CD4-positive, alpha-beta T cell (primary cell): ENCODE measurements at regions of chr7 and their contacts with region 1.

Region 1: DNA sequence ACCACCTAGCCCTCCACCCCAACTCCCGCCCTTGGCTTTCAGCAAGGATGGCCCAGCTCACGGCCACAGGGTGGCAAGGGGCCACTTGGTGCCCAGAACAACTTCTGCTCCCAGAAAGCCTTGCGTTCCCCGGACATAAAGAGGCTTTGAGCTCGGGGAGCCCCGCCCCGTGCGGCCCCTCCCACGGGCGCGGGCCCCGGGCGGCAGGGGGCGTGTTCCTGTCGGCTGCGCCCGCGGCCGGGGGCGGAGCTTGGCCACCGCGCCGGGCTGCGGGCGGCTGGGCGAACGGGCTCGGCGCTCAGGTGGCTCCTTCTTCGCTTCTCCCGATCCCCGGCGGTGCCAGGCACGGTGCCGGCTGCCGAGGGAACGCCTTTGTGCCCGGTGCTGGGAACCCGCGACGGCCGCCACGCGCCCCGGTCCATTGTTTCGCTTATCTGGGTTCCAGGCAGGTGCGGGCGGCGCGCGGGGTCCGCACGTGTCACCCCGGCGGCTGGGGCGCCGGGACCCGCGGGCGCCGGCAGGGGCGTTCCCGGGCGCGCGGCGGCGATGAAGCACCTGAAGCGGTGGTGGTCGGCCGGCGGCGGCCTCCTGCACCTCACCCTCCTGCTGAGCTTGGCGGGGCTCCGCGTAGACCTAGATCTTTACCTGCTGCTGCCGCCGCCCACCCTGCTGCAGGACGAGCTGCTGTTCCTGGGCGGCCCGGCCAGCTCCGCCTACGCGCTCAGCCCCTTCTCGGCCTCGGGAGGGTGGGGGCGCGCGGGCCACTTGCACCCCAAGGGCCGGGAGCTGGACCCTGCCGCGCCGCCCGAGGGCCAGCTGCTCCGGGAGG is at the start of gene NFE2L3:
- DNase-seq: peak; percentile 60 to 93 (median 76)
- ATAC-seq: peak; percentile 81
- H3K4me3 ChIP-seq: peak within 1 kb of the TSS; percentile 69
- H3K4me3 Mint-ChIP-seq: peak within 1 kb of the TSS; percentile 96
- H3K27ac ChIP-seq: peak within 1 kb of the TSS; percentile 31 to 63
- H3K27ac Mint-ChIP-seq: peak within 1 kb of the TSS; percentile 80
- H3K4me1 ChIP-seq: peaks cover 54% of the 10 kb centered on the region
- H3K4me1 Mint-ChIP-seq: peaks cover 51% of the 10 kb centered on the region
- H3K27me3 ChIP-seq: no peaks in the 10 kb centered on the region
- H3K27me3 Mint-ChIP-seq: no peaks in the 10 kb centered on the region
- CTCF ChIP-seq: no peak
- total RNA-seq, gene NFE2L3: 0.45 to 0.93 TPM

Region 2: GRCh38 chr7:26090927-26091519 is 61.1 kb before region 1 on chr7:
- CTCF ChIA-PET with region 1: no interaction called
- POLR2A ChIA-PET with region 1: interaction called, 25 read pairs
- intact Hi-C with region 1: loop called (anchors 5 kb)
- DNase-seq: peak in 4 of 14 experiments; percentile 31 to 73 (median 64)
- ATAC-seq: peak; percentile 71
- H3K4me3 ChIP-seq: no peak overlapping the region
- H3K4me3 Mint-ChIP-seq: no peak overlapping the region
- H3K27ac ChIP-seq: no peak overlapping the region
- H3K27ac Mint-ChIP-seq: no peak overlapping the region
- H3K4me1 ChIP-seq: peaks cover 7% of the 10 kb centered on the region
- H3K4me1 Mint-ChIP-seq: peaks cover 40% of the 10 kb centered on the region
- H3K27me3 ChIP-seq: no peaks in the 10 kb centered on the region
- H3K27me3 Mint-ChIP-seq: no peaks in the 10 kb centered on the region
- CTCF ChIP-seq: peak; percentile 92

Region 3: GRCh38 chr7:26180792-26181198 is 28.6 kb after region 1 on chr7:
- CTCF ChIA-PET with region 1: no interaction called
- POLR2A ChIA-PET with region 1: interaction called, 11 read pairs
- intact Hi-C with region 1: no loop called
- DNase-seq: no peak
- ATAC-seq: no peak
- H3K4me3 ChIP-seq: no peak overlapping the region
- H3K4me3 Mint-ChIP-seq: no peak overlapping the region
- H3K27ac ChIP-seq: no peak overlapping the region
- H3K27ac Mint-ChIP-seq: peak overlapping the region; percentile 6
- H3K4me1 ChIP-seq: peaks cover 15% of the 10 kb centered on the region
- H3K4me1 Mint-ChIP-seq: peaks cover 52% of the 10 kb centered on the region
- H3K27me3 ChIP-seq: no peaks in the 10 kb centered on the region
- H3K27me3 Mint-ChIP-seq: no peaks in the 10 kb centered on the region
- CTCF ChIP-seq: no peak

Region 4: DNA sequence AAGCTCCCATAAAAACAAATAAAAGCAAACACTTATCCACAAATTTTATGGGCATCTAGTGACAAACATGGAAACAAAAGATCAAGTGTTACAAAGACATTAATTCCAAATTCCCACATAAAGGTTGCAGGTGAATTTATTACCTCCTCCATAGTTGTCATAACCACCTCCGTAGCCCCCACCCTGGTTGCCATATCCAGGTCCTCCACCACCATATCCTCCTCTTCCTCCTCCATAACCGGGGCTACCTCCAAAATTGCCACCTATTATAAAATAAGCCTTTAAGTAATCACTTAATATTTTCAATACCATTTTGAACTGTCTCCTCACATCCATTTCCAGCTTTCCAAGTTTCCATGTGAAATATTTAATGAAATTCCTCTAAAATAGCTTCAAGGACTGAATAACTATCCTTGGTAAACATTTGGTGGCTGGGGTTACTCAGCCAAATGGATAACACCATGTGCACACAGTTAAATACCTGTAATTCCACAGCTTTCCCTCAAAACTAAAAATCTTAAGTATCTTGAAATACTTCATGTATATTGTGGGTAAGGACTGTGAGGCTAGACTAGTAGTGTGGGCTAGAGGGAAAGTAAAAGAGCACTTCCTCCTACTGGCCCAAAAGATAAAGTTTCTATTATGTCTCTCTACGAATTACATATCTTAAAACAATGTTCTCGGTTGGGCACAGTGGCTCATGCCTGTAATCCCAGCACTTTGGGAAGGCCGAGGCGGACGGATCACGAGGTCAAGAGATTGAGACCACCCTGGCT is 41.5 kb after region 1 on chr7:
- CTCF ChIA-PET with region 1: interaction called, 18 read pairs
- POLR2A ChIA-PET with region 1: interaction called, 146 read pairs
- intact Hi-C with region 1: loop called (anchors 1 to 2 kb)
- DNase-seq: peak in 1 of 14 experiments; percentile 34
- ATAC-seq: no peak
- H3K4me3 ChIP-seq: no peak overlapping the region
- H3K4me3 Mint-ChIP-seq: peak overlapping the region; percentile 87
- H3K27ac ChIP-seq: peak overlapping the region; percentile 5 to 33
- H3K27ac Mint-ChIP-seq: peak overlapping the region; percentile 83
- H3K4me1 ChIP-seq: peaks cover 39% of the 10 kb centered on the region
- H3K4me1 Mint-ChIP-seq: peaks cover 94% of the 10 kb centered on the region
- H3K27me3 ChIP-seq: no peaks in the 10 kb centered on the region
- H3K27me3 Mint-ChIP-seq: no peaks in the 10 kb centered on the region
- CTCF ChIP-seq: no peak